ENCODE measurements at regions of chr4 and their contacts with region 1.

Region 1: GRCh38 chr4:17817020-17817419 is 6.2 kb downstream of the NCAPG start:
- DNase-seq: peak in 3 of 14 experiments; percentile 67 to 70 (median 67)
- ATAC-seq: peak; percentile 79
- H3K4me3 ChIP-seq: no peak overlapping the region
- H3K4me3 Mint-ChIP-seq: no peak overlapping the region
- H3K27ac ChIP-seq: no peak overlapping the region
- H3K27ac Mint-ChIP-seq: no peak overlapping the region
- H3K4me1 ChIP-seq: no peaks in the 10 kb centered on the region
- H3K4me1 Mint-ChIP-seq: peaks cover 7% of the 10 kb centered on the region
- H3K27me3 ChIP-seq: no peaks in the 10 kb centered on the region
- H3K27me3 Mint-ChIP-seq: no peaks in the 10 kb centered on the region
- CTCF ChIP-seq: peak; percentile 62

Region 2: DNA sequence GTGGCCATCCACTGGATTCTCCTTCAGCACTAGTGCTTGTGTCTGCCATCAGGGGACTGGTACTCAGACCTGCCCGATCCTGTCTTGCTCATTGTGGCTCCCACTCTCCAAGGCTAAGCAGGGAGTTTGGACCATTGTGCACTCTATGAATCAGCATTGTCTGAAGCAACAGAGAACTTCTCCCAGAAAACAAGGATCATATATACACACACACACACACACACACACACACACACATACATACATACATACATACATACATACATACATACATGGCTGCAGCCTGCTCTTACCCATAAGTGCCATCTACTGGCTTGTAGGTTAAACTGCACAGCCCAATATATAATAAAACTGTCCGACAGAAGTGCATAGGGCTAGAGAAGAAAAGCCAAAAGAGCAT is 549.9 kb after region 1 on chr4:
- CTCF ChIA-PET with region 1: no interaction called
- POLR2A ChIA-PET with region 1: no interaction called
- intact Hi-C with region 1: loop called (anchors 2 to 5 kb)
- DNase-seq: peak in 3 of 14 experiments; percentile 24 to 34 (median 25)
- ATAC-seq: no peak
- H3K4me3 ChIP-seq: no peak overlapping the region
- H3K4me3 Mint-ChIP-seq: no peak overlapping the region
- H3K27ac ChIP-seq: no peak overlapping the region
- H3K27ac Mint-ChIP-seq: no peak overlapping the region
- H3K4me1 ChIP-seq: no peaks in the 10 kb centered on the region
- H3K4me1 Mint-ChIP-seq: no peaks in the 10 kb centered on the region
- H3K27me3 ChIP-seq: no peaks in the 10 kb centered on the region
- H3K27me3 Mint-ChIP-seq: peaks cover 19% of the 10 kb centered on the region
- CTCF ChIP-seq: peak; percentile 29

Region 3: GRCh38 chr4:18593445-18594002 is 776.5 kb after region 1 on chr4:
- CTCF ChIA-PET with region 1: interaction called, 4 read pairs
- POLR2A ChIA-PET with region 1: interaction called, 3 read pairs
- intact Hi-C with region 1: loop called (anchors 1 to 2 kb)
- DNase-seq: peak in 13 of 14 experiments; percentile 5 to 77 (median 23)
- ATAC-seq: peak; percentile 62
- H3K4me3 ChIP-seq: no peak overlapping the region
- H3K4me3 Mint-ChIP-seq: no peak overlapping the region
- H3K27ac ChIP-seq: no peak overlapping the region
- H3K27ac Mint-ChIP-seq: no peak overlapping the region
- H3K4me1 ChIP-seq: peaks cover 5% of the 10 kb centered on the region
- H3K4me1 Mint-ChIP-seq: peaks cover 7% of the 10 kb centered on the region
- H3K27me3 ChIP-seq: peaks cover 0 to 9% of the 10 kb centered on the region in 2 experiments
- H3K27me3 Mint-ChIP-seq: peaks cover 26% of the 10 kb centered on the region
- CTCF ChIP-seq: peak; percentile 81

Measured in CD4-positive, alpha-beta T cell (primary cell).